Mammary epithelial cell (primary cell): ENCODE measurements at regions of chr17 and their contacts with region 1.

Region 1: DNA sequence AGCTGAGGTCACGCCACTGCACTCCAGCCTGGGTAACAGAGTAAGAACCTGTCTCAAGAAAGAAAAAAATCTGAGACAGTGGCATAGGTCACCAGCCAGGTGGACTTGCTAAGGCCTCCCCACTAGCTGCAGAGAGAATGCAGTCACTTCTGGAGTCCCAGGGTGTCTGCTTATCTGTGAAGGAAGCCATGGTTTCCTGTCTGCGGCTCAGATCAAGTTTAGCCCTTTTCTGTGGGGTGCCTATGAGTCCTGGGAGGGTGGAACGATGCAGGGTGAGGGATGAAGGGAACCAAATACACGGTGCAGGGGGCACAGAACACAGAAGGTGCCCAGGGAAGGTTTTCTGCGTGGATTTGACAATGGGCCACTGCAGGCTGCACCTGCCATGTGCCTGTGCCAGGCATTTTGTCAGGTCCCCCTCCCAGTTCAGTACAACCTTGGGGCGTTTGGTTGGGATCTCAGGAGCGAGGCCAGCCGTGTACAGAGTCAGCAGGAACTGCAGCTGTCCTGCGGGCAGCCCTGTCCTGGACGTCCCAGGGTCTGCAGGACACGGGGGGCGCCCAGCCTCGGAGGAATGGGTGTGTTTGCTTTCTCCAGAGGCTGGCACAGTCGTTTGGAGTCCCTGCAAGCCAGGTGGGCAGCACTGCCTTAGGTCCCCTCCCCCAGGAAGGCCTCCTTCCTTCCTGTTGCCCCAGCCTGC is 41.8 kb downstream of the RAB11FIP4 start:
- DNase-seq: no peak
- H3K4me3 ChIP-seq: no peak overlapping the region
- H3K27ac ChIP-seq: no peak overlapping the region
- H3K4me1 ChIP-seq: no peaks in the 10 kb centered on the region
- H3K27me3 ChIP-seq: peaks cover 3% of the 10 kb centered on the region
- CTCF ChIP-seq: no peak

Region 2: GRCh38 chr17:31517524-31517923 is 84.3 kb after region 1 on chr17:
- CTCF ChIA-PET with region 1: interaction called, 3 read pairs
- dilution Hi-C with region 1: no loop called
- in situ Hi-C with region 1: no loop called
- intact Hi-C with region 1: loop called (anchors 1 kb)
- DNase-seq: no peak
- H3K4me3 ChIP-seq: no peak overlapping the region
- H3K27ac ChIP-seq: no peak overlapping the region
- H3K4me1 ChIP-seq: no peaks in the 10 kb centered on the region
- H3K27me3 ChIP-seq: no peaks in the 10 kb centered on the region
- CTCF ChIP-seq: peak; percentile 14 to 26

Region 3: GRCh38 chr17:31533546-31534155 is 100.4 kb after region 1 on chr17:
- CTCF ChIA-PET with region 1: no interaction called
- dilution Hi-C with region 1: loop called (anchors 5 kb)
- in situ Hi-C with region 1: loop called in 1 of 2 experiments (anchors 5 kb)
- intact Hi-C with region 1: no loop called
- DNase-seq: peak; percentile 69
- H3K4me3 ChIP-seq: no peak overlapping the region
- H3K27ac ChIP-seq: no peak overlapping the region
- H3K4me1 ChIP-seq: peaks cover 11% of the 10 kb centered on the region
- H3K27me3 ChIP-seq: no peaks in the 10 kb centered on the region
- CTCF ChIP-seq: peak; percentile 4 to 19

Region 4: GRCh38 chr17:31858642-31859473 is 425.6 kb after region 1 on chr17 and contains the start of gene COPRS:
- CTCF ChIA-PET with region 1: no interaction called
- dilution Hi-C with region 1: no loop called
- in situ Hi-C with region 1: no loop called
- intact Hi-C with region 1: loop called (anchors 5 kb)
- DNase-seq: peak; percentile 70
- H3K4me3 ChIP-seq: peak within 1 kb of the TSS; percentile 69 to 81 (median 73)
- H3K27ac ChIP-seq: peak within 1 kb of the TSS; percentile 42
- H3K4me1 ChIP-seq: peaks cover 20% of the 10 kb centered on the region
- H3K27me3 ChIP-seq: no peaks in the 10 kb centered on the region
- CTCF ChIP-seq: no peak
- total RNA-seq, gene COPRS: 39.8 to 41.9 TPM

Region 5: DNA sequence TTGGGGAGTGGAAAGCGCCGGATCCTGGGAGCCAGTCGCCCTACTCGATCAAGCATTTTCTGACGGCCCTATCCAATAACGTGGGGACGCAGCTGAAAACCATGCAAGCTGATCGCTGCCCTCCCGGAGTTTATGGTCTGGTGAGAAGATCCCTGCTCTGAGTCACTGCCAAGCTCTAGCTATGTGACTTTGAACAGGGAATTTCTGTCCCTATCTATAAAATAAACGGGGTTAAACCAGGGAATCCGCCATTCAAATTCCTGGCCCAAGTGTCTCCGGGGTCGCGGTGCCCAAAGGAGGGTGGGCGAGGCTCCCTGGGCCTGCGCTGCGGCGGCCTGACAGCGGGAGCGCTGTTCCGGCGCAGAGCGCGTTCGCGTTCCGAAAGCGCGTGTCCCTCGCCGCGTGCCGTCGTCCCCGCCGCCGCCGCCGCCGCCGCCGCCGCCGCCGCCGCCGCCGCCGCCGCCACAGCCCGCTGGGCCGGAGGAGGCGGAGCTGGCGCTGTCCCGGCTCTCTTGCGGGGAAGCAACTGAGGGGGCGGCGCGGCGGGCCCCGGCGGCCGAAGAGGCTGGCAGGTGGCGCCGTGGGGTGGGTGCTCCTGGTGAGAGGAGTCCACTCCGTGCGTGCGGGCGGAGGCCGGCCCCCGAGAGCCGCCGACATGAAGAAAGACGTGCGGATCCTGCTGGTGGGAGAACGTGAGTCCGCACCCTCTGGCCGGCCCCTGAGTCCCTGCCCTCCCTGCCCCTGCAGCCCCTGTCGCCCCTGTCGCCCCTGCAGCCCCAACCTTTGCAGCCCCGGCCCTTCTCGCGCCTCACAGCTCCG is 709.0 kb after region 1 on chr17 and contains the start of gene RHOT1:
- CTCF ChIA-PET with region 1: no interaction called
- dilution Hi-C with region 1: no loop called
- in situ Hi-C with region 1: no loop called
- intact Hi-C with region 1: loop called (anchors 1 kb)
- DNase-seq: peak; percentile 86
- H3K4me3 ChIP-seq: peak within 1 kb of the TSS; percentile 75 to 100 (median 100)
- H3K27ac ChIP-seq: peak within 1 kb of the TSS; percentile 70
- H3K4me1 ChIP-seq: peaks cover 13% of the 10 kb centered on the region
- H3K27me3 ChIP-seq: no peaks in the 10 kb centered on the region
- CTCF ChIP-seq: peak; percentile 13 to 63
- total RNA-seq, gene RHOT1: 20.3 to 28.3 TPM